ENCODE measurements at regions of chr17 and their contacts with region 1.

Region 1: DNA sequence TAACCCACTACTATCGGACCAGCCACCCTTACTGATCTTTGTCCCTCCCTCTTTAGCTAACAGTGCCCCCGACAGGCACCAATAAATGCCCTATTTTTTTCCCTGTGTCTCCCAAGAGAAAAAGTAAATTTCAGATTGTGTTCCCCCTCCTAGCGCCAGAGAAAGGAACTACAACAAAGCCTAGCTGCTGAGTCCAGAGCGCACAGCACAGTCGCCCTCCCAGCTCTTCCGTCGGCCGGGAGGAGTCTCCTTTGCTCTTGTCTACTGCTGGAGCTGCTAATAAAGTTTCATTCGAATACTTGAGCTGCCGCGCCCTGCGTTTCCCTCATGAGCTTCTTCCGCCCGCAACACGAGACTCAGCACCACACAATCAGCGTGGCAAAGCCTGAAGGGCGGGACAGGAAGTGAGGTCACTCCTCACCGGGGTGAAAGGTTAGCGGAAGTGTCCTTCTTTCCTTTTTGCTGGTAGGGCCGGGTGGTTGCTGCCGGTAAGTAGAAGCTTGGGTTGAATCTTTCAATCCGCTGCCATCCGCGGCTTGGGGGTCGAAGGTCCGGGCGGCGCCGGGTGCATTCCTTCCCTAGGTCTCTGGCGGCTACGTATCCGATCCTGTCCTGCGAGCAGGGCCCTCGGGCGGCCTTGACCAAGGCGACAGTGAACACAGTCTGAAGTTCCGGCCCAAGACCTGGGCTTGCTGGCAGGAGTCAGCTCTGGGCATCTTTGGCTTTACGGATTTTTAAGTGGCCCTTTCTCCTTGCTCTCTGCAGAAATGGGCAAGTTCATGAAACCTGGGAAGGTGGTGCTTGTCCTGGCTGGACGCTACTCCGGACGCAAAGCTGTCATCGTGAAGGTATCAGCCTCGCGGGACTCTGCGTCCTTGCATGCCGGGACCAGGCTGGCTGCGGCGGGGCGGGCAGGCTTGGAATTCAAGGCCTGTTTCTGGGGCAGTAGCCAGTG is at the start of gene RPL27:
- DNase-seq: peak; percentile 95
- H3K4me3 Mint-ChIP-seq: peak within 1 kb of the TSS; percentile 94
- H3K27ac Mint-ChIP-seq: peak within 1 kb of the TSS; percentile 96
- H3K4me1 Mint-ChIP-seq: peaks cover 23% of the 10 kb centered on the region
- H3K27me3 Mint-ChIP-seq: no peaks in the 10 kb centered on the region
- total RNA-seq, gene RPL27: 1,049 and 1,126 TPM in 2 replicates

Region 2: DNA sequence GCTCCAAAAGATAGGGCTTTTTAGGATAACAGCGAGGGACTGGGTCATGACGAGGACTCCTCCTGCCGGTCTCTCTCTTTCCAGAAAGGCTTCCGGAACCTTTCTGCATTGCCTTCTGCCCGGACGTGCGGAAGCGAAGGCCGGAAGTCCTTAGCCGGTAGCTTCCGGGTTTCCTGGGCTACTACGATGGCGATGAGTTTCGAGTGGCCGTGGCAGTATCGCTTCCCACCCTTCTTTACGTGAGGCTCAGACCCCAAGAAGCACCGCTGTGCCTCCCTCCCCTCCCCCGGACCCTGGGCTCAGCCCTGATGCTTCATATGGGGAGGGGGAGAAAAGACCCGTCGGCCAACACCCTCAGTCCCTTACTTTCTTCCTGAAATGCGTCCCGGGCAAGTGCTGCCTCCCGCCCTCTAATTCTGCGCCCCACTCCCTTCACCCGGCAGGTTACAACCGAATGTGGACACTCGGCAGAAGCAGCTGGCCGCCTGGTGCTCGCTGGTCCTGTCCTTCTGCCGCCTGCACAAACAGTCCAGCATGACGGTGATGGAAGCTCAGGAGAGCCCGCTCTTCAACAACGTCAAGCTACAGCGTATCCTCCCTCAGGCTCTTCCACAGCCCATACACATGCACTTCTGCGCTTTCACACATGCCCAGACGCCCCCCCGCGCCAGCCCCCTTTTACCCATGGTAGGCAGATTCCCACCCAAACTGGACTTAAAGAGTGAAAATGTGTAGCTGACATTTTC is 224.8 kb before region 1 on chr17 and contains the start of gene VPS25:
- intact Hi-C with region 1: loop called (anchors 1 kb)
- DNase-seq: peak; percentile 71
- H3K4me3 Mint-ChIP-seq: peak within 1 kb of the TSS; percentile 99
- H3K27ac Mint-ChIP-seq: peak within 1 kb of the TSS; percentile 96
- H3K4me1 Mint-ChIP-seq: peaks cover 27% of the 10 kb centered on the region
- H3K27me3 Mint-ChIP-seq: no peaks in the 10 kb centered on the region
- total RNA-seq, gene VPS25: 93.6 and 97.0 TPM in 2 replicates

Region 3: GRCh38 chr17:42964161-42964932 is 33.9 kb before region 1 on chr17 and contains the start of gene AARSD1:
- intact Hi-C with region 1: loop called (anchors 1 kb)
- DNase-seq: peak; percentile 90
- H3K4me3 Mint-ChIP-seq: peak within 1 kb of the TSS; percentile 94
- H3K27ac Mint-ChIP-seq: peak within 1 kb of the TSS; percentile 90
- H3K4me1 Mint-ChIP-seq: peaks cover 13% of the 10 kb centered on the region
- H3K27me3 Mint-ChIP-seq: no peaks in the 10 kb centered on the region
- total RNA-seq, gene AARSD1: 78.2 and 85.5 TPM in 2 replicates

Region 4: DNA sequence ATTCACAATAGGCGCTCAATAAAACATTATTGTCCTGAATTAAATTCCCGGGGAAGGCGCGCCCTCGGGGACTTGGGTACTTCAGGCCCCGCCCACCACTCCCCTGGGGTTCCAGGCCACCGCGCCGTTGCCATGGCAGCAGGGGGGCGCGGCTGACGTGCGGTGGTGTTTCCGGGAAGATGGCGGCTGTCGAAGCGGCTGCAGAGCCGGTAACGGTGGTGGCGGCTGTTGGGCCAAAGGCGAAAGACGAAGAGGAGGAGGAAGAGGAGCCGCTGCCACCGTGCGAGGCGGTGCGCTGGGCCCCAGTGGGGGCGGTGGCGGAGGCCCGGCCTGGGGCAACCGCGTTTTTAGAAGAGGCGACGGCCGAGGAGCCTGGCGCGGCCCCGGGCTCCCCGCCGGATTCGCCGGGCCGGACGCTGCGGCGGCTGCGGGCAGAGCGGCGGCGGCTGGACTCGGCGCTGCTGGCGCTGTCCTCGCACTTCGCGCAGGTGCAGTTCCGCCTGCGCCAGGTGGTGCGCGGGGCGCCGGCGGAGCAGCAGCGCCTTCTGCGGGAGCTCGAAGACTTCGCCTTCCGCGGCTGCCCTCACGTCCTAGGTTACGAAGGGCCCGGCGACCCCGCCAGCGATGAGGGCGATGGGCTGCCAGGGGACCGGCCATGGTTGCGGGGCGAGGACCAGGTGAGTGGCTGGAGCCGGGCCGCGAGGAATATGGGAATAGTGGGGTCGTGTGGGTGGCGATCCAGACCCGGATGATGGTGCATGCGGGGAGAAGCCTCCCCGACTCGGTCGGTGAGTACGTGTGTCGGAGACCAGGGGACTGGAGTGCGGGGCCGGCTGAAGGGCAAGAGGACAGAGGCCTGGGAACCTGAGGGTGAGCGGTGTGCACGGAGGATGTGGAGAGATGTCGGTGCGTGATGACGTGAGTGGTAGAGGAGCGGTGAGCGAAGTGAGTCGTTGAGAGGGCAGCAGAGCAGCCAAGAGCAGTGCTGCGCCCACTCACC is 17.6 kb before region 1 on chr17 and contains the start of gene RUNDC1:
- intact Hi-C with region 1: loop called (anchors 1 kb)
- DNase-seq: peak; percentile 87
- H3K4me3 Mint-ChIP-seq: peak within 1 kb of the TSS; percentile 100
- H3K27ac Mint-ChIP-seq: peak within 1 kb of the TSS; percentile 99
- H3K4me1 Mint-ChIP-seq: peaks cover 42% of the 10 kb centered on the region
- H3K27me3 Mint-ChIP-seq: peaks cover 2% of the 10 kb centered on the region
- total RNA-seq, gene RUNDC1: 16.9 and 18.8 TPM in 2 replicates

Region 5: GRCh38 chr17:43024407-43025289 is 26.4 kb after region 1 on chr17 and contains the start of gene RND2:
- intact Hi-C with region 1: loop called (anchors 1 kb)
- DNase-seq: peak; percentile 73
- H3K4me3 Mint-ChIP-seq: peak within 1 kb of the TSS; percentile 90
- H3K27ac Mint-ChIP-seq: peak within 1 kb of the TSS; percentile 84
- H3K4me1 Mint-ChIP-seq: peaks cover 16% of the 10 kb centered on the region
- H3K27me3 Mint-ChIP-seq: peaks cover 25% of the 10 kb centered on the region
- total RNA-seq, gene RND2: 0.07 TPM in 1 of 2 replicates, not detected in the other

Region 6: GRCh38 chr17:43211480-43212402 is 213.5 kb after region 1 on chr17 and contains the start of gene TMEM106A:
- intact Hi-C with region 1: loop called (anchors 1 kb)
- DNase-seq: peak; percentile 60
- H3K4me3 Mint-ChIP-seq: peak within 1 kb of the TSS; percentile 97
- H3K27ac Mint-ChIP-seq: peak within 1 kb of the TSS; percentile 90
- H3K4me1 Mint-ChIP-seq: peaks cover 35% of the 10 kb centered on the region
- H3K27me3 Mint-ChIP-seq: no peaks in the 10 kb centered on the region
- total RNA-seq, gene TMEM106A: 18.2 and 19.1 TPM in 2 replicates

Region 7: GRCh38 chr17:43316522-43317142 is 318.4 kb after region 1 on chr17:
- intact Hi-C with region 1: loop called (anchors 1 kb)
- DNase-seq: peak; percentile 38
- H3K4me3 Mint-ChIP-seq: no peak overlapping the region
- H3K27ac Mint-ChIP-seq: peak overlapping the region; percentile 77
- H3K4me1 Mint-ChIP-seq: peaks cover 24% of the 10 kb centered on the region
- H3K27me3 Mint-ChIP-seq: peaks cover 2% of the 10 kb centered on the region